A673 (cell line): ENCODE measurements at regions of chr6 and their contacts with region 1.

Region 1: DNA sequence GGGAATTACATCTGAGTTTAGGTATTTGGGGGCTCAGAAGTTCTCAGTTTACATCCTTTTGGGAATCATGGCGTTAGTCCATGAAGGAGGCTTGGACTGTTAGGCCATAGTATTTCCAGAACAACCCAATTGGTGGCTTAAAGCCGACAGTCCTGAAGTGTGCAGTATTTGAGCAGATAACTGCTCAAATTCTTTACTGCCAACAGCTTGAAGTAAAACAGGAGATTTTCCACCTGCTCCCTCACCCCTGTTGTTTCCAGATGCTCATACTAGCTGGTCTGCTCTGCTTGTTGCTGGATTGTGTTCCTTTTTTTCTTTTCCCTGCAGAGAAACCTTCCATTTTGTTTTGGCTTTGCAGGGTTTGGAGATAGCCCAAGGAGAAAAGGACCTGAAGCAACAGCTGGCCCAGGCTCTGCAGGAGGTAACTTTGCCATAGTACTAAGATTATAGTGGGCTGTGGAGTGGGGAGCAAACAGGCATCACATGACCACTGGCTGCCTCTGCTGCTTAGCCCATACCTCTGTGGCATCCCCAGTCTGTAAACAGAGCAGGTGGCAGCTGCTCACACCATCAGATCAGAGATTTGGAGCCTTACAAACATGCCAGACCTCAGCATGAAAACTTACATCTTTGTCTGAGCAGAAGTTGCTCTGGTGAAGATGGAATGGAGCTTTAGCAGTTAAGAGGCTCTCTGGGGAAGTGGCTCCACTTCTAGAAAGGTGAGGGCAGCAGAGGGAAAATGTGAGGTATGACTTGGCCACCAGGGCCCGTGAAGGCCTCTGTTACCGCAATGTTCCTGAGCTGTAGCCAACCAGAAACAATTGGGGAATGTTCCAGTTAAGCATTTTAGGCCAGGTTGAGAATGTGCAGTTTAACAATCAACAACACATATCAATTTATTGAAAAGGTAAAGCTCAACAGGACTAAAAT is 17.6 kb downstream of the RNF8 start:
- DNase-seq: no peak
- H3K4me3 ChIP-seq: no peak overlapping the region
- H3K27ac ChIP-seq: no peak overlapping the region
- H3K4me1 ChIP-seq: peaks cover 12% of the 10 kb centered on the region
- H3K27me3 ChIP-seq: no peaks in the 10 kb centered on the region
- CTCF ChIP-seq: no peak

Region 2: DNA sequence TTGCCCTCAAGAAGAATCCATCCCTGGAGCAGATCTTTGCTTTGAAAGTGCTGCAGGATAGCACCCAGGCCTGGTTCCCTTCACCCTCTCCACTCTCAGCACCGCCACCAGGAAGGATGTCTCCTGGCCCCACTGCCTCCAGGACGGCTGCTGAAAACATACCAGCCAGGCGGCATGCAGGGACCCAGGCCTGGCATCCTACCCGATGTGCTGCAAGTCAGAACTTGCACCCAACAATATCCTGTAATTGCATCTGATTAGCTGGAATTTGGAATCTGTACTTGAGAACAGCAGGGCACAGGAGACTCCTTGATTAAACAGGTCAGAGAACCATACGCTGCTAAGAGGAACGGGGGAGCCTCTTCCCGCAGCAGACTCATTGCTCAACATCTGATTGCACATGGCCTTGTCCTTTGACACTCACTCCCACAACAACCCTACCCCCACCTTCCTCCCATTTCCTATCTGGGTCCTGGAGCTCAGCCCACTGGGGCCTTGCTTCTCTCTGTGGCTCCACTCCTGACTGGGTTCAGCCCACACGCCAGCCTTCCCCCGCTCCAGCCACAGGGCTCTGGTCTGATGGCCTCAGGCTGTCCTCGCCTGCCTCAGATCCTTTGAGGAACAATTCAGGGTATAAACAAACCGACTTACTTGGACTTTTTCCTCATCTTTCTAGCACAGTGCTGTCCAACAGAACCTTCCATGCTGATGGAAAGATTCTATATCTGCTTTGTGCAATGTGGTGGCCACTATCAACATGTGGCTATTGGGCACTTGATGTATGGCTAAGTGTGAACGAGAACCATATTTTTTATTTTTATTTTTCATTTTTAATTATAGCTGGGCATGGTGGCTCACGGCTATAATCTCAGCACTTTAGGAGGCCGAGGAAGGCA is 287.9 kb before region 1 on chr6:
- CTCF ChIA-PET with region 1: interaction called, 11 read pairs
- POLR2A ChIA-PET with region 1: no interaction called
- intact Hi-C with region 1: no loop called
- DNase-seq: peak; percentile 52
- H3K4me3 ChIP-seq: no peak overlapping the region
- H3K27ac ChIP-seq: no peak overlapping the region
- H3K4me1 ChIP-seq: peaks cover 8% of the 10 kb centered on the region
- H3K27me3 ChIP-seq: no peaks in the 10 kb centered on the region
- CTCF ChIP-seq: no peak